H1 (cell line): ENCODE measurements at regions of chr11 and their contacts with region 1.

Region 1: GRCh38 chr11:33912405-33913361 is 20.8 kb upstream of the LMO2 start:
- DNase-seq: no peak
- H3K4me3 ChIP-seq: no peak overlapping the region
- H3K27ac ChIP-seq: no peak overlapping the region
- H3K4me1 ChIP-seq: peaks cover 0 to 5% (median 0%) of the 10 kb centered on the region in 4 experiments; a peak in 1 of 7 replicates
- H3K27me3 ChIP-seq: no peaks in the 10 kb centered on the region
- CTCF ChIP-seq: no peak
- EP300 ChIP-seq: no peak
- POLR2A ChIP-seq: no peak
- RAD21 ChIP-seq: no peak

Region 2: GRCh38 chr11:33885338-33886005 is 27.2 kb before region 1 on chr11:
- CTCF ChIA-PET with region 1: no interaction called
- POLR2A ChIA-PET with region 1: no interaction called
- DNase-seq: no peak
- H3K4me3 ChIP-seq: no peak overlapping the region
- H3K27ac ChIP-seq: no peak overlapping the region
- H3K4me1 ChIP-seq: no peaks in the 10 kb centered on the region
- H3K27me3 ChIP-seq: no peaks in the 10 kb centered on the region
- CTCF ChIP-seq: no peak
- EP300 ChIP-seq: no peak
- POLR2A ChIP-seq: no peak
- RAD21 ChIP-seq: no peak

Region 3: DNA sequence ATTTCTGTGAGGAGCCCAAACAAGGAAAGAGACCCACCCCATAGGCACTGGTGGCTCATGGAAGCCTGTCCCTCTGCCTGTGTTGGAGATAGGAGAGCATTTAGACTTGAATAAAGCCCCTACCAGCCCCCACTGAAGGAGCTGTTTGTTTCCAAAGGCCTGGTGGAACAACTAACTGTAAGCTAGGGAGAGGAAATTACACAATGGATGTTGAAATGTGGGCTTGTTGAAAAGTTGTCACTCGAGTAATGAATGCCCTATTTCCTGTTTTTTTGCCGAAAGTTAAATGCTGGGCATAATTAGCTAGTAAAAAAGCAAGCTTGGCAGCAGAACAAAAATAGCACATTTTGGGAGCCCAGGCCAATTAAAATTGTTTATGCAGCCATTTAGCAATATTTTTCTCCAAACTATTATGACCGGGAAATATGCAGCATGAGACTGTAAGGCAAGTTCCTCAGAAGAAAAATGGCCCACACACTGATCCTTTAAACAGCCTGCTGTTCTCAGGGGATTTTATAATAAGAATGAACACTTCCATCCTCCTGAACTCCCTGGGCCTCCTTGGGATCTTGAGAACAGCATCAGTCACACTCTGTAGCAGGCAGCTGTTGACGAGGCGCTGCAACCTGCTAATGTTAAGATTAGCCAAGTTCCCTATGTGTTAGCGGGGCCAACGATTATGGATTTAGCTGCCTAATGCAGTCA is 17.8 kb after region 1 on chr11:
- CTCF ChIA-PET with region 1: interaction called, 10 read pairs
- POLR2A ChIA-PET with region 1: no interaction called
- DNase-seq: no peak
- H3K4me3 ChIP-seq: no peak overlapping the region
- H3K27ac ChIP-seq: no peak overlapping the region
- H3K4me1 ChIP-seq: peaks cover 0 to 9% (median 4%) of the 10 kb centered on the region in 4 experiments; a peak in 2 of 7 replicates
- H3K27me3 ChIP-seq: no peaks in the 10 kb centered on the region
- CTCF ChIP-seq: no peak
- EP300 ChIP-seq: no peak
- POLR2A ChIP-seq: no peak
- RAD21 ChIP-seq: no peak